AG04449 (cell line): ENCODE measurements at regions of chr13 and their contacts with region 1.

Region 1: GRCh38 chr13:44470638-44471562 is 97.3 kb downstream of the SERP2 start:
- DNase-seq: no peak
- H3K4me3 ChIP-seq: no peak overlapping the region
- CTCF ChIP-seq: no peak

Region 2: GRCh38 chr13:44458313-44458975 is 12.5 kb before region 1 on chr13:
- CTCF ChIA-PET with region 1: interaction called, 14 read pairs
- POLR2A ChIA-PET with region 1: no interaction called
- DNase-seq: no peak
- H3K4me3 ChIP-seq: no peak overlapping the region
- CTCF ChIP-seq: no peak